ENCODE measurements at regions of chr7 and their contacts with region 1.

Region 1: DNA sequence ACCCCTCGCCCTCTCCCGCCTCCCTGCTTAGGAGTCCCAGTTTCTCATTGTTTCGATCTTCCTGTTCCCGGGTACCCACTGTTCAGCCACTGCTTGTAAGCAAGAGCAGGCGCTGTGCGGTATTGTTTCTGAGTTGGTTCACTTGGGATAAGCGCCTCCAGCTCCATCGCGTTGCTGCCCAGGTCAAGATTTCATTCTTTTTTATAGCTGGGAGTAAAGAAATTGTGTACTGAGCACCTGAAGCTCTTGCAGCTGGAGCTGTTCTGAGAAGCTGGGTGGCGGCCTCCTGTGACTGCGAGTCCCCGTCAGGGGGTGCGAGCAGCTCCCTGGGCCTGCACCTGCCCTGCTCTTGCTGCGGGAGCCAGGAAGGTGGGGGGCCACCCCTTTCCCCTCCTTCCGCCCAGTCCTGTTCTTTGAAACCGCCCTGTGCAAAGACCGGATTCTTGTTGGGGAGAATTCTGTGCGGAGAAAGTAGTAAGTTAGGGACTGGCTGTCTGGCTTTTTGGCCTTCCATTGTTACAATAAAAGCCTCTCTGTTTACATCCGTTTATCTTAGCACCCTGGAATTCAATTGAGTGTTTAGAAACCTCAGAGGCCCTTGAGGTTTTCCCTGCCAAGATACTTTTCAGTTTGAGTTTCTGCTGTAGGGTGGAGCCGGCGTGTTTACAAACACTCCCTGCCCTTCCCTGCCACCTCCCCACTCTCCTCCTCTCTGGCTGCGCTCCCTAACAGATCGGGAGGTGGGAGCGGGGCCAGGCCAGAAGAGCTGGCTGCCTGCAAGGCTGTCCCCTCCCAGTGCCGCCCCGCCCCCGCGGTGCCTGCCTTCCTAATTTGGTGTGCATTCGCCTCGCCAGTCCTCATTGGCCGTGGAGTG is 30.8 kb upstream of the AP5Z1 start:
- DNase-seq: peak; percentile 38 to 88 (median 72)
- ATAC-seq: peak; percentile 68
- H3K4me3 ChIP-seq: peak overlapping the region; percentile 50 to 64
- H3K4me3 Mint-ChIP-seq: peak overlapping the region; percentile 79
- H3K27ac ChIP-seq: peak overlapping the region; percentile 81 to 84
- H3K27ac Mint-ChIP-seq: peak overlapping the region; percentile 93
- H3K4me1 ChIP-seq: peaks cover 65% of the 10 kb centered on the region
- H3K4me1 Mint-ChIP-seq: peaks cover 67% of the 10 kb centered on the region
- H3K27me3 ChIP-seq: no peaks in the 10 kb centered on the region
- H3K27me3 Mint-ChIP-seq: no peaks in the 10 kb centered on the region
- CTCF ChIP-seq: no peak

Region 2: DNA sequence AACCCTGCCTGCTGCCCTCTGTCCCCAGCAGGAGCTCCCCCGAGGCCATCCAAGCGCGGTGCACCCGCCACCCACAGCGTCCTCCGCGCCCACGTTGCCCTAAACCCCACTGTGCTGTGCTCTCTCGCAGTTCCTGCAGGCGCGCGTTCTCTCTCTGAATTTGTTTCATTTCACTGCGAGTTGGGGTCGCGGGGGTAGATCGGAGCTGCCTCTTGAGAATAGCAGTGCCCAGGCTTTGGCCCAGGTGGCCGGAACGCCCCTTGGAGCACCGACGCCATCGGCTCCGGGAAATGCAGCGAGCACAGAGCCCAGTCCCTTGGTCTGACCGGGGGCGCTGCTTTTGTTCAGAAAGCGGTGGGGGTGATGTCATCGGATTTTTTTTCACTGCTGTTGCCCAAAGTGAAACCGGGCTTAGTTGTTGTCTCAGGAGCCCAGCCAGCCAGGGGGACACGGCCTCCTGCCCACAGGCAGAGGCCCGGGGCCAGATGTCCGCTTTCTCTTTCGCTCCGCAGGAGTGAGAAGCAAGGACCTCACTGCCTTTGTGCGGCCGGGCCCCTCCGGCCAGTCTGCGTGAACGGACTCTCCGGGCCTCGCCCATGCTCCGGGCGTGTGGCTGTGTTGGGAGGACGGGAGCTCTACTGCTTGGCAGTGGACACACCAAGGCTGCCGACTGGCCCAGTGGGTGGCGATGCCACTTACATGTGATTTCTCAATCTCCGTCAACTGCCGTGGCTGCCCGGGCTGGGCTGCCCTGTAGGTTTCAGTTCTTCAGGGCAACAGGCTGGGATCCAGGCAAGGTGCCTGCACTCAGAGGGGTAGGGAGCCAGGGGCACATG is 19.4 kb before region 1 on chr7:
- CTCF ChIA-PET with region 1: interaction called, 6 read pairs
- POLR2A ChIA-PET with region 1: interaction called, 5 read pairs
- intact Hi-C with region 1: loop called (anchors 1 to 2 kb)
- DNase-seq: peak in 8 of 9 experiments; percentile 30 to 84 (median 66)
- ATAC-seq: peak; percentile 81
- H3K4me3 ChIP-seq: peak overlapping the region; percentile 70 to 80
- H3K4me3 Mint-ChIP-seq: peak overlapping the region; percentile 95
- H3K27ac ChIP-seq: peak overlapping the region; percentile 91 to 94
- H3K27ac Mint-ChIP-seq: peak overlapping the region; percentile 99
- H3K4me1 ChIP-seq: peaks cover 54% of the 10 kb centered on the region
- H3K4me1 Mint-ChIP-seq: peaks cover 55% of the 10 kb centered on the region
- H3K27me3 ChIP-seq: no peaks in the 10 kb centered on the region
- H3K27me3 Mint-ChIP-seq: no peaks in the 10 kb centered on the region
- CTCF ChIP-seq: no peak

Region 3: DNA sequence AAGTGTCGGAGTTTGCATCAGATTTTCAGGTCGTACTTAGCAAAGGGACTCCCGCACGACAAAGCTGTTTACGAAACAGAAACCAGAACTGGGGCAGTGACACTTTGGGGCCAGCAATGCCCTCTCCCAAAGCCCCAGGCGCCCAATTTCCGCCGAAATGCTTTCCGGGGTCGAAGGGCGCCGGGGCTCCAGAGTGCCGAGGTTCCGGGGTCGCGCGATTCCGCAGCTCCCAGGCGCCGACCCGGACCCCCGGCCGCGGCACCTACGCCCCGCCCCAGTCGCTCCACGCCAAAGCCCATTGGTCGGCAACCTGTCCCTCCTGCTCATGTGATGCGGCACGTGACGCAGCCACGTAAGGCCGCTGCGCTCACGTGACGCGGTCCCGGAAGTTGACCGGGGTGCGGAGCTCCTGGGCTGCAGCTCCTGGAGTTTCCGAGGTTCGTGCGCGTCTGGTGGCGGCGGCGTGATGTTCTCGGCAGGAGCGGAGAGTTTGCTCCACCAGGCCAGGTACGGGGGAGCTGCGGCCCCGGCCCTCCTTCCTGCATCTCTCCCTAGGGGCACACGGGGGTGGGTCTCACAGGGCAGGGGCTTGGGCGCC is 30.7 kb after region 1 on chr7 and contains the start of gene AP5Z1:
- CTCF ChIA-PET with region 1: interaction called, 4 read pairs
- POLR2A ChIA-PET with region 1: interaction called, 10 read pairs
- intact Hi-C with region 1: loop called in 1 of 2 experiments (anchors 2 kb)
- DNase-seq: peak; percentile 90 to 99 (median 95)
- ATAC-seq: peak; percentile 93
- H3K4me3 ChIP-seq: peak within 1 kb of the TSS; percentile 80 to 98
- H3K4me3 Mint-ChIP-seq: peak within 1 kb of the TSS; percentile 99
- H3K27ac ChIP-seq: peak within 1 kb of the TSS; percentile 93 to 94
- H3K27ac Mint-ChIP-seq: peak within 1 kb of the TSS; percentile 99
- H3K4me1 ChIP-seq: peaks cover 25% of the 10 kb centered on the region
- H3K4me1 Mint-ChIP-seq: peaks cover 47% of the 10 kb centered on the region
- H3K27me3 ChIP-seq: no peaks in the 10 kb centered on the region
- H3K27me3 Mint-ChIP-seq: no peaks in the 10 kb centered on the region
- CTCF ChIP-seq: no peak
- total RNA-seq, gene AP5Z1: 129 to 131 TPM

Measured in CD8-positive, alpha-beta T cell (primary cell).